ENCODE measurements at regions of chr1 and their contacts with region 1.

Region 1: GRCh38 chr1:164087906-164088453 is 471.0 kb upstream of the PBX1 start:
- DNase-seq: no peak
- H3K4me3 ChIP-seq: no peak overlapping the region
- H3K27ac ChIP-seq: no peak overlapping the region
- H3K4me1 ChIP-seq: no peaks in the 10 kb centered on the region
- H3K27me3 ChIP-seq: no peaks in the 10 kb centered on the region
- CTCF ChIP-seq: no peak
- POLR2A ChIP-seq: no peak

Region 2: GRCh38 chr1:163628034-163628773 is 459.8 kb before region 1 on chr1:
- intact Hi-C with region 1: loop called (anchors 5 kb)
- DNase-seq: no peak
- H3K4me3 ChIP-seq: no peak overlapping the region
- H3K27ac ChIP-seq: no peak overlapping the region
- H3K4me1 ChIP-seq: no peaks in the 10 kb centered on the region
- H3K27me3 ChIP-seq: no peaks in the 10 kb centered on the region
- CTCF ChIP-seq: no peak
- POLR2A ChIP-seq: no peak

Region 3: GRCh38 chr1:164064501-164064900 is 23.5 kb before region 1 on chr1:
- intact Hi-C with region 1: no loop called
- DNase-seq: no peak
- H3K4me3 ChIP-seq: no peak overlapping the region
- H3K27ac ChIP-seq: no peak overlapping the region
- H3K4me1 ChIP-seq: no peaks in the 10 kb centered on the region
- H3K27me3 ChIP-seq: no peaks in the 10 kb centered on the region
- CTCF ChIP-seq: no peak
- POLR2A ChIP-seq: no peak

Measured in breast epithelium (tissue), 4 donors.